Psoas muscle (tissue), 8 donors: ENCODE measurements at regions of chr5 and their contacts with region 1.

Region 1: DNA sequence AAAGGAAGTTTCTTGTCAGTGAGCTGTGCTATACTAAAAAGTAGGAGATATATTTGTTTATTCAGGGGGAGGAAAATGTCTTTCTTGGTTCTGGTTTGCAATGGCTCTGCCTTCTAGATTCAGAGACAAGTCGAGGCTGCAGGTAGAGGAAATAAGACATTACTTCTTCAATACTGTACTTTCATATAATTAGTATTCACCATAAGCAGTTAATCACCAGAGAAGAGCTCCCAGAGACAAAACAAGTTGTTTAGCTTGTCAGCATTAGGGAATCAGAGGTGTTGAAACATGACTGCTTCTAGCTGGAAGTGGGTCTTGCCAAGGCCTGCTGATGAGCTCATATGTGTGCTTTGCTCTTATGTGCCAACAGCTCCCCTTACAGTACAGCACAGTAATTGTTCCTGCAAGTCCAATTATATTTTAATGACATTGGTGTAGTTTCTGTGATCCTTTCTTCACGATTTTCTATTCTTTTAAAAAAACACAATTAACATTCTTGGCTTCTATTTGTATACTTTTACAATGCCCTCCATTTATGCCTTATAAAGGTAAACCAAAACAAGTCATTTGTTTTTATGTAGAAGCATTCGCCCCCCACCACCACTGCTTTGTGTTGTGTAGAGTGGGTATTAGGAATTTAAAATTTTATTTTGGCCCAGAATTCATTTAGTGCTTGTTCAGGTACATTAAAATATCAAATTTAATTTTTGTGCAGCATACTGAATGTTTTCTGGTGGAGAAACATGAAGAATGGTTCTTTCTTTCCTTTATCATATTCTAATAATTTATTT is 112.2 kb downstream of the RPS23 start:
- DNase-seq: peak; percentile 60 to 83
- ATAC-seq: peak; percentile 98 to 100 (median 100)
- H3K4me3 ChIP-seq: no peak overlapping the region
- H3K27ac ChIP-seq: peak overlapping the region; percentile 71
- H3K4me1 ChIP-seq: peaks cover 14% of the 10 kb centered on the region
- H3K27me3 ChIP-seq: no peaks in the 10 kb centered on the region
- CTCF ChIP-seq: peak; percentile 71

Region 2: GRCh38 chr5:81425569-81425968 is 740.4 kb before region 1 on chr5:
- intact Hi-C with region 1: loop called (anchors 5 kb)
- DNase-seq: no peak
- ATAC-seq: peak in 3 of 4 donors; percentile 52 to 73 (median 56)
- H3K4me3 ChIP-seq: no peak overlapping the region
- H3K27ac ChIP-seq: peak overlapping the region; percentile 14
- H3K4me1 ChIP-seq: peaks cover 20% of the 10 kb centered on the region
- H3K27me3 ChIP-seq: no peaks in the 10 kb centered on the region
- CTCF ChIP-seq: peak; percentile 75

Region 3: GRCh38 chr5:81751009-81751835 is 414.7 kb before region 1 on chr5 and contains the start of gene SSBP2:
- intact Hi-C with region 1: loop called (anchors 10 kb)
- DNase-seq: peak; percentile 100
- ATAC-seq: peak; percentile 90 to 95 (median 93)
- H3K4me3 ChIP-seq: peak within 1 kb of the TSS; percentile 86
- H3K27ac ChIP-seq: peak within 1 kb of the TSS; percentile 95
- H3K4me1 ChIP-seq: peaks cover 48% of the 10 kb centered on the region
- H3K27me3 ChIP-seq: no peaks in the 10 kb centered on the region
- CTCF ChIP-seq: no peak
- total RNA-seq, gene SSBP2: 25.3 to 42.6 (median 34.6) TPM

Region 4: GRCh38 chr5:81856948-81857928 is 308.7 kb before region 1 on chr5:
- intact Hi-C with region 1: loop called (anchors 5 to 10 kb)
- DNase-seq: peak; percentile 81 to 92
- ATAC-seq: peak; percentile 84 to 91 (median 90)
- H3K4me3 ChIP-seq: peak overlapping the region; percentile 42
- H3K27ac ChIP-seq: peak overlapping the region; percentile 60
- H3K4me1 ChIP-seq: peaks cover 37% of the 10 kb centered on the region
- H3K27me3 ChIP-seq: no peaks in the 10 kb centered on the region
- CTCF ChIP-seq: peak; percentile 23

Region 5: DNA sequence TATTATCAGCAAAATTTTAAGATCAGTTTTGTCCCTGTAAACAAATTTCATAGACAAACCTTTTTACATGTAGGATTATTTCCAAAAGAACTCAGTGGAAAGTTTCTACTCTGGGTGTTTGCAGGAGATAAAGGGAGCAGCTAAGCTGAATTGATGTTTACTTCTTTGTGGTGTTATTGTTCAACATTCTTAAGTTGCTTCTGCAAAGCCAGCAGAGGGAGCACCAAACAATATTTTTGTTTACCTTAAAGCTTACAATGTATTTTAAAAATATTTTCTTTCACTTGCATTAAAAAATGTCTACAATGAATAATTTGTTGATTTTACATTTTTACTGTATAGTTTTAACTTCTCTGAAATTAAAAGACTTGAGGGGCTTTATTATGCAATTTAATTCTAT is 58.7 kb before region 1 on chr5:
- intact Hi-C with region 1: loop called (anchors 2 to 5 kb)
- DNase-seq: no peak
- ATAC-seq: peak in 2 of 4 donors; percentile 56 to 78
- H3K4me3 ChIP-seq: no peak overlapping the region
- H3K27ac ChIP-seq: no peak overlapping the region
- H3K4me1 ChIP-seq: peaks cover 10% of the 10 kb centered on the region
- H3K27me3 ChIP-seq: no peaks in the 10 kb centered on the region
- CTCF ChIP-seq: peak; percentile 50

Region 6: DNA sequence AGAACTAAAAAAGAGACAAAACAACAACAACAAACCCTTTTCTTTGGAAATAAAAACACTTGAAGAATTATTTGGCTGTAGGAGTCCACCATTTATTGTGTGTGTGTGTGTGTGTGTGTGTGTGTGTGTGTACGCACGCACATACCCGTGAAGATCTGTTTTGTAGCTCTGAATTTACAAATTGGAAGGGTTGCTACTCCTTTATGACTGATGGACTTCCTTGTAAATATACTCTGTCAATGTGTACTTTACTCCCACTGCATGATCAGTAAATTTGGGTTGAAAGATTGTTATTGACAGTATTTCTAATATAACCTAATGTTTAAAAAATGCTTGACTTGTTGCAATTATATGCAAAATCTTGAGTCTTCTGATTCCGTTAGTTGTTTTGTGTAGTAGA is 46.0 kb before region 1 on chr5:
- intact Hi-C with region 1: no loop called
- DNase-seq: no peak
- ATAC-seq: no peak
- H3K4me3 ChIP-seq: no peak overlapping the region
- H3K27ac ChIP-seq: no peak overlapping the region
- H3K4me1 ChIP-seq: no peaks in the 10 kb centered on the region
- H3K27me3 ChIP-seq: no peaks in the 10 kb centered on the region
- CTCF ChIP-seq: no peak